Esophagus muscularis mucosa (tissue), 4 donors: ENCODE measurements at regions of chr9 and their contacts with region 1.

Region 1: GRCh38 chr9:100352727-100353505 is at the start of gene TEX10:
- DNase-seq: peak; percentile 95
- H3K4me3 ChIP-seq: peak within 1 kb of the TSS; percentile 79 to 100 (median 92)
- H3K27ac ChIP-seq: peak within 1 kb of the TSS; percentile 87 to 91 (median 89)
- H3K4me1 ChIP-seq: peaks cover 10 to 35% (median 29%) of the 10 kb centered on the region in 4 donors
- H3K27me3 ChIP-seq: no peaks in the 10 kb centered on the region
- CTCF ChIP-seq: no peak
- EP300 ChIP-seq: no peak
- POLR2A ChIP-seq: peak; percentile 46
- total RNA-seq, gene TEX10: 10.4 to 16.4 (median 11.2) TPM

Region 2: GRCh38 chr9:99445371-99445891 is 907.5 kb before region 1 on chr9:
- intact Hi-C with region 1: no loop called
- DNase-seq: peak; percentile 90
- H3K4me3 ChIP-seq: no peak overlapping the region
- H3K27ac ChIP-seq: peak overlapping the region in 2 of 4 donors; percentile 6 to 36
- H3K4me1 ChIP-seq: peaks cover 6 to 18% (median 15%) of the 10 kb centered on the region in 4 donors
- H3K27me3 ChIP-seq: no peaks in the 10 kb centered on the region
- CTCF ChIP-seq: no peak
- EP300 ChIP-seq: no peak
- POLR2A ChIP-seq: no peak

Region 3: DNA sequence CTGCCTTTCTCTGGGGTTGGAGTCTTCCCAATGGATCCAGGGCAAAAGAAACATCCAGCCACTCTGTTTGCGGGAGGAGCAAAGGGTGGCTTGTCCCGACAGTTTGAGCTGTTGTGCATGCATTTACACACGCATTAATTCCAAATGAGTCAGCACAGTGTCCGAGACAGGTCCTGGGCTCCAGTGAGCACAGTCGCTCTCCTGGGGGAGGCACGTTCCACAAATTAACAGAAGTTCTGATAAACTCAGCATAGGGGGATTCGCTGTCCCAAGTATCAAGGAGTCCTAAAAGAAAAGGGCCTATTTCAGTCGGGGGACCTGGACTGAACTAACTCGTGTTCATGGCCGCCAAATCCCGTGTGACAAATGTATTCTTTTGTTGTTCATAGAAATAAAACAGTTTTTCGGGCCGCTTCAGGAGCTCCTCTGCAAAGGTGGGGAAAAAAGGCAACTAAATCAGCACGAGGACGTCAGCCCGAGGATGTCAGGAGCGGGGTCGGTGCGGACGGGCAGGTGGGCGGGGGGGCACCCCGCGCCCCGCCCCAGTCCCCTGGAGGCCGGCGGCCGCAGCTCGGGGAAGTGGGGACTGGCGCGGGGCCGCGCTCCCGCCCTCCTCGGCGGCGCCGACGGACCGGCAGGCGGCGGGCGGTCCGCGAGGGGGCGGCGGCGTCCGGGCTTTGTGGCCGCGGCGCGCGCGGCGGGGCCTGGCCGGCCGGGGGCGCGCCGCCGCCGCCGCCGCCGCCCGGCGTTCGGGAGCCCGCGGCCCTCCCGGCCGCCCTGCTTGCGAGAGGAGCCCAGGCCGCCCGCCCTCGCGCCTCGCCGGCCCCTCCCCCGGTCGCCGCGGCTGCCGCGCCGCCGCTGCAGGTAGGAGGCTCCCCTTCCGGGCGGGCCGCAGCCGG is 73.9 kb after region 1 on chr9 and contains the start of gene MSANTD3:
- intact Hi-C with region 1: loop called (anchors 5 kb)
- DNase-seq: no peak
- H3K4me3 ChIP-seq: peak within 1 kb of the TSS; percentile 82 to 98 (median 86)
- H3K27ac ChIP-seq: peak within 1 kb of the TSS; percentile 94 to 97 (median 96)
- H3K4me1 ChIP-seq: peaks cover 32 to 37% (median 36%) of the 10 kb centered on the region in 4 donors
- H3K27me3 ChIP-seq: no peaks in the 10 kb centered on the region
- CTCF ChIP-seq: peak in 1 of 3 experiments; percentile 27
- EP300 ChIP-seq: no peak
- POLR2A ChIP-seq: no peak
- total RNA-seq, gene MSANTD3: 28.5 to 50.4 (median 41.3) TPM

Region 4: DNA sequence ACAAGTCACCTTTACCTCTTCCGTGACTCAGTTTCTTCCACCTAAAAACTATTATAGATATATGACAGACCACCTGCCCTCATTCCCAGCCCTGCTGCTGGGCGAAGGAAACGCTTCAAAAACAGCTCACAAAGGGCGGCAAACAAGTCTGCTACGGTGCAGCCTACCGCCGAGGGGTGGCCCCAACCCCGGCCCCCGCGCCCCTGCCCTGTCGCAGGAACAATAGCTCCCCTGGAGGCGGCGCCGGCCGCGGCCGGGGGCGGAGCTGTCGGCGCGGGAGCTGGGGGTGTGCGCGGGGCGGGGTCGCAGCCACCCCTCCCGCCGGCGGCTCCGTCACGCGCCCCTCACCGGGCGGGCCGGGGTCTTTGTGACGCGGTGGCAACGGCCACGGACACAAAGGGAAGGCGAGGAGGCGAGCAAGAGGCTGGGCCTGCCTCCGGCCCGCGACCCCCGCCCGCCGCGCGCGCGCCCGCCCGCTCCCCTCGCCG is 119.9 kb after region 1 on chr9 and contains the start of gene TMEFF1:
- intact Hi-C with region 1: no loop called
- DNase-seq: no peak
- H3K4me3 ChIP-seq: peak within 1 kb of the TSS; percentile 70 to 73 (median 72)
- H3K27ac ChIP-seq: peak within 1 kb of the TSS in 1 of 4 donors; percentile 41
- H3K4me1 ChIP-seq: peaks cover 8 to 21% (median 16%) of the 10 kb centered on the region in 4 donors
- H3K27me3 ChIP-seq: peaks cover 0 to 15% (median 0%) of the 10 kb centered on the region in 4 donors
- CTCF ChIP-seq: peak in 1 of 3 experiments; percentile 25
- EP300 ChIP-seq: no peak
- POLR2A ChIP-seq: no peak
- total RNA-seq, gene TMEFF1: 0.50 to 1.7 (median 0.73) TPM